ENCODE measurements at regions of chr16 and their contacts with region 1.

Region 1: DNA sequence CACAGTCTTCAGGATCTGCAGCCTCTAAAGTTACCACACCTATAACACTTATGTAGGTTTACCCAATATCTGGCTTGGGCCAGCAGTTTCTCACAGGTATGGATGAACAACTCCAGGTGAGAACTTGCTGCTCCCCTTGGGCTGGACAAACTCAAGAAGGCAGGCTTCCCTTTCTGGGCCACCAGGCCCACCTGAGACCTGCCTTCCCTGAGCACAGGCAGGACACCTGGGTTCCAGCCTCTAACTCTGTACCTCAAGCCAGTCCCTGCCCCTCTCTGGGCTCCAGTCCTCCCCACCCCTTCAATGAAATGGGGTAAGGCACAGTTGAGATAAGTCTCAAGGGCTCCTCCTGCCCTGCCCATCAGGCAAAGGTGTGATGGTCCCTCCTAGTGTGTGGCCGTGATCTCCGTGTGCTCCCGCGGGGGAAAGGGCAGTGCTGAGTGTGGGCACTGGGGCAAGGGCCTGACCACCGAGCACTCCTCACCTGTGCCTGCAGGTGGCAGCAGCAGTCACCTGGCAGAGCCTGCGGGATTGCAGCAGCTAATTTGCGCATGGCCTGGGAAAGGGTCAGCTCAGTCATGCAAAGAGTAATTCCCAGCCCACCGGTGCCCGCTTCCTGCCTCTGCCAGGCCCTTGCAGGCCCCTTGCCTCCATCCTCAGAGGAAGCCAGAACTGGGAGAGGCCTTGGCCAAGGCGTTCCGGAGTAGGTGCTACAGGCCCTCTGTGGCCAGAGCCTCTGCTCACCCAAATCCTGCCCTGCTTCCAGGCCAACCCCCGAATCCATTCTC is 28.2 kb upstream of the ADGRG1 start:
- DNase-seq: peak; percentile 67
- H3K4me3 ChIP-seq: no peak overlapping the region
- H3K27ac ChIP-seq: no peak overlapping the region
- H3K4me1 ChIP-seq: no peaks in the 10 kb centered on the region
- H3K27me3 ChIP-seq: no peaks in the 10 kb centered on the region
- CTCF ChIP-seq: peak; percentile 60

Region 2: DNA sequence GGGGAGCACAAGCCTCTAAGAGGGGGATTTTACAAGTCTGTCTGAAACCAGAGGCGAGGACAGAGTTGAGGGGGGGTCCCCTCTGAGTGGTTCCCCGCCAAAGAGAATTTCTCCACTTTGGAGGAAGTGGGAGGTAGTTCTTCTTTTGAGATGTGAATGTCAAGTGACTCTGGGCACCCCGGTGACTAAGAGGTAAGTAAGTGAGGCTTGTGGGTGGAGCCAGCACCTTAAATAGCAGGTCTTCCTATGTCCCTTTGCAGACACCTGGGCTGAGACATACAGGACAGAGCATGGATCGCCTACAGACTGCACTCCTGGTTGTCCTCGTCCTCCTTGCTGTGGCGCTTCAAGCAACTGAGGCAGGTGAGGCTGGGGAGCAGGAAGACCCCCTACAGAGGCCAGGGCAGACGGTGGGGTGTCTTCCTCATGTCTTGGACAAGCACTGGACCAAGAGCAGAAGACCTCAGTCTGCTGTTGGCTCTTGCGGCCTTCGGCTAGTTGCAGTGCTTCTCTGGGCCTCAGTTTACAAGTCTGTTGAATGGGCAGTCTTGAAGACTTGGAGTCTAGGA is 241.6 kb before region 1 on chr16 and contains the start of gene CCL22:
- intact Hi-C with region 1: no loop called
- DNase-seq: no peak
- H3K4me3 ChIP-seq: no peak within 1 kb of the TSS
- H3K27ac ChIP-seq: no peak within 1 kb of the TSS
- H3K4me1 ChIP-seq: no peaks in the 10 kb centered on the region
- H3K27me3 ChIP-seq: no peaks in the 10 kb centered on the region
- CTCF ChIP-seq: no peak
- total RNA-seq, gene CCL22: 0.24 to 1.7 TPM

Region 3: GRCh38 chr16:57648590-57649442 is 48.6 kb after region 1 on chr16:
- intact Hi-C with region 1: loop called (anchors 2 kb)
- DNase-seq: peak; percentile 81
- H3K4me3 ChIP-seq: no peak overlapping the region
- H3K27ac ChIP-seq: no peak overlapping the region
- H3K4me1 ChIP-seq: no peaks in the 10 kb centered on the region
- H3K27me3 ChIP-seq: no peaks in the 10 kb centered on the region
- CTCF ChIP-seq: peak; percentile 99

Region 4: DNA sequence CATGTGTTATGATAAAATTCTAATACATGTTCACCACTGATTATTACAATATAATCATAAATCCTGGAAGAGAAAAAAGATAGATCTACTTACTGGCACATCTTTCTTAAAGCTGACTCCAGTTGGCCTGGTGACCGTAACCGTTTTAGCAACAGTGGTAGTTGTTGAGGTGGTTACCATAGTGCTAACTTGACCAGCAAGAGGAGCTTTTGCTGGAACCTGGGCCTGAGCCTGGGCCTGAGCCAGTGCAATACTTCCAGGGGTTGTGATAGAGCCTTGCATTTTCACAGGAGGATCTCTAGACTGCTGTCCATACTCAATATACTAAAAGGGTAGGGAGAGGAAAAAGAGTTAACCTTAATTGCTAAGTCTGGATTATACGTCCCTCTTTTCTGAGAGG is 951.3 kb after region 1 on chr16:
- intact Hi-C with region 1: no loop called
- DNase-seq: no peak
- H3K4me3 ChIP-seq: no peak overlapping the region
- H3K27ac ChIP-seq: no peak overlapping the region
- H3K4me1 ChIP-seq: no peaks in the 10 kb centered on the region
- H3K27me3 ChIP-seq: no peaks in the 10 kb centered on the region
- CTCF ChIP-seq: no peak